AG04450 (cell line): ENCODE measurements at regions of chr16 and their contacts with region 1.

Region 1: GRCh38 chr16:29700253-29700987 is 21.4 kb downstream of the QPRT start:
- DNase-seq: peak; percentile 72
- H3K4me3 ChIP-seq: no peak overlapping the region
- H3K27ac ChIP-seq: no peak overlapping the region
- H3K27me3 ChIP-seq: peaks cover 7% of the 10 kb centered on the region
- CTCF ChIP-seq: peak; percentile 90

Region 2: DNA sequence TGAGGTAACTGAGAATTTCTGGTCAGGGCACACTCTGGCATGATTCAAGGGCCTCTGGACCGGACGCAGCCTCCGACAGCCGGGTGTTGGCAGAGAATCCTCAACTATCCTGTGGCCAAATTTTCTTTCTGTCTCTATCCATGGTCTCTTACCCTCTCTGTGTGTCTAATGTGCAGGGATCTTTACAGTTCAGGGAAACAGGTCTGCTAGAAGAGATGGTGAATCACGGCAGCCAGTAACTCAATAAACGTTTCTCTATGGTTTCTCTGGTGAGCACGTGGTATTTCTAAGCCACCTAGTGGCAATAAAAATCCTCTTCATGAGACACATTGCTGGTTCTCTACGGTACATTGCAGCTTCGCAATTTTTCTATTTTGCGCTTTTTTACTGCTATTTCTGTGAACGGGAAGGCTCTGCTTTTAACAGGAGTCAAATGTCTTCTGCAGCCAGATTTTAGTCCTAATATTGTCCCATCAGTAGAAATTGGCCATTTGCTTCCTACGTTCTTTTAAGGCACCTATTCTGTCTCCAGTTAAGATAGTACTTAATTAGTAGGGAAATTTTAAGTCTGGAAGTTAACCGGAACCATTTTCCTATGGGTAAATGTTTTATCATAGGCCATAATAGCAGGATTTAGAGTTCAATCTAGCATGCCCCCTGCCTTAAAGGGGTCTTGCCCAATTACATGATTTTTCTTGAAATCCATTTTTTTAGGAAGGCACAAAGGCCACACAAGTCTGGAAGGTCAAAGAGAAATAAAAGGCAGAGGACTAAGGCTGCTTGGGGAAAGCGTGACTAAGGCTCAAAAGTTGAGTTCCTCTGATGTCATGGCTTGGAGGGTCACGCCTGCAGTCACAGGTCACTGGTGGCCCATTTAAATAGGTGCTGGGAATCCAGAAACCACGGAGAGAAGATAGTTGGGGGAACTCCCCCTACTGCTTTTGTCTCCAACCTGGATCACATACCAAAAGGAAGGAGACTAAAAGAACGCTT is 10.1 kb after region 1 on chr16:
- CTCF ChIA-PET with region 1: interaction called, 12 read pairs
- POLR2A ChIA-PET with region 1: no interaction called
- DNase-seq: peak; percentile 48
- H3K4me3 ChIP-seq: no peak overlapping the region
- H3K27ac ChIP-seq: no peak overlapping the region
- H3K27me3 ChIP-seq: peaks cover 2% of the 10 kb centered on the region
- CTCF ChIP-seq: peak; percentile 71

Region 3: DNA sequence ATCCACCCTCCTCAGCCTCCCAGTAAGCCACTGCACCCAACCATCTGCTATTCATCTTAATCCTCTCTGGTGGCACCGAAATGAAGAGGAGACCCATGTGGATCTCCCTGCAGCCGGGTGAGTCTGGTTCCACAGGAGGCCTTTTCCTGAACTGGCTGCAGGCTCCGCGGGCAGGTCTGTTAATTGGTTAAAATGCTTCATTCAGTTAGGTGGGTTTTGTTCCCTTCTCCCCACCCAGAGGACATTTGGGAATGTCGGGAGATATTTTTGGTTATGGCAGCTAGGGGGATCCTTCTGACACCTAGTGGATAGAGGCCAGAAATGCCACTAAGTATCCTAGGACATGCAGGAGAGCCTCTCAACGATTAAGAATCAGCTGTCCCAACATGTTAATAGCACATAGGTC is 28.7 kb after region 1 on chr16:
- CTCF ChIA-PET with region 1: interaction called, 13 read pairs
- POLR2A ChIA-PET with region 1: no interaction called
- DNase-seq: peak; percentile 4
- H3K4me3 ChIP-seq: no peak overlapping the region
- H3K27ac ChIP-seq: no peak overlapping the region
- H3K27me3 ChIP-seq: peaks cover 10% of the 10 kb centered on the region
- CTCF ChIP-seq: peak; percentile 73

Region 4: DNA sequence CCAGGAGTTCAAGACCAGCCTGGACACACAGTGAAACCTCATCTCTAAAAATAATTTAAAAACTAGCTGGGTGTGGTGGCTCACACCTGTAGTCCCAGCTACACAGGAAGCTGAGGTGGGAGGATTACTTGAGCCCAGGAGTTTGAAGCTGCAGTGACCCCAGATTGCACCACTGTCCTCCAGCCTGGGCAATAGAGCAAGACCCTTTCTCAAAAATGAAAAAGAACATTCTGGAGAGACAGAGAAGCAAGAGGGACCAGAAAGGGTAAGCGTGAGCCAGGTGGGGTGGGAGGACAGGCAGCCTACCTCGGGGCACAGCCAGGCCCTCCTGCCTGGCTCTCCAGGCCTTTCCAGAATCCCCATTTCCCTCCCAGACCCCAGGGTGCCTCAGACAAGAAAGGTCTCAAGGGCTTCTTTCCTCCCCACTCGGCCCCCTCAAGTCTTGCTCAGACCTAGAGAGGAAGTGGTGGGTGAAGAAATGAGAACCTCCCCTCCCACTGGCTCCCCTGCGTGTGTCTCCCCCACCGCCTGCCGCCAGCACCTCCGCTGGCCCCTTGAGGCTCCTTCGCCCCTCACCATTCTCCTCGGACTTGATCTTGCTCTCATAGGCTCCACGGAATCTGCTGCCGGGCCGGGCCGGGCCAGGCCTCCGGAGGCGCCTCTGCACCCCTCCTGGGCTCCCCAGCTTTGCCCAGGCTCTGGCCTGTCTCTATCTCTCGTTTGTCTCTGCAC is 44.9 kb after region 1 on chr16:
- CTCF ChIA-PET with region 1: no interaction called
- POLR2A ChIA-PET with region 1: no interaction called
- DNase-seq: no peak
- H3K4me3 ChIP-seq: no peak overlapping the region
- H3K27ac ChIP-seq: no peak overlapping the region
- H3K27me3 ChIP-seq: peaks cover 15% of the 10 kb centered on the region
- CTCF ChIP-seq: no peak

Region 5: DNA sequence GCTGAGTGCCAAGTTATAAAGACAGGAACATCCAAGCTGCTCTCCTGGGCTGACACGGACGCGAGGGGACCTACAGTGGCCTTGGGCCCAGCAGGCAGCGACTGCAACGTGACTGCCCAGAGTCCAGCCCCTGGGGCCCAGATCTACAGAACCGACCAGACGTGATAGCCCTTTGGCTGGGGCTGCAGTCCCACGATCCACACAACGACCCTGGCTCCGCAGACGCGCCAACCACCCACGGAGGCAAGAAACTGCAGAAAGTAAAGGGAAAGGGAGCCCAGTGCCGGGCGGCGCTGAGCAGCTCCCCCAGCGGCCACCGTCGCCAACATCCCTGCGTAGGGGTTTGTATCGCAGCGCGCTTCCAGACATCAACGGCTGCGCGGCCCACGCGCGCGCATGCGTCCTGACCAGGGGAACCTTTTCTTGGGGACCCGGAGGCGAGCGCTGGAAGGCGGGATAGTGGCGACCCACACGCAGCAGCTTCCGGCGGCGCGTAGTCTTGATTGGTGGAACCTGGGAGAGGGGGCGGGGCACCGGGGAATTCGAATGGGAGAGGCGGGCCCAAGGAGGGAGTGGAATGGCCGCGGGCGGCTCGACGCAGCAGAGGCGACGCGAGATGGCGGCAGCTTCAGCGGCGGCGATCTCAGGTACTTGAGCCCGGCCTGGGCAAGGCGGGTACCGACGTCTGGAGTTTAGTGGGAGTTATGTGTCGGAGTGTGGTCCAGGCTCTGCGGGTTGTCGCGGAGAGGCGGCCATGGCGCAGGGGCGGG is 89.9 kb after region 1 on chr16 and contains the start of gene KIF22:
- CTCF ChIA-PET with region 1: interaction called, 11 read pairs
- POLR2A ChIA-PET with region 1: interaction called, 3 read pairs
- DNase-seq: peak; percentile 98
- H3K4me3 ChIP-seq: peak within 1 kb of the TSS; percentile 88
- H3K27ac ChIP-seq: peak within 1 kb of the TSS; percentile 57
- H3K27me3 ChIP-seq: no peaks in the 10 kb centered on the region
- CTCF ChIP-seq: peak; percentile 67
- polyA plus RNA-seq, gene KIF22: 14.1 and 19.9 TPM in 2 replicates

Region 6: DNA sequence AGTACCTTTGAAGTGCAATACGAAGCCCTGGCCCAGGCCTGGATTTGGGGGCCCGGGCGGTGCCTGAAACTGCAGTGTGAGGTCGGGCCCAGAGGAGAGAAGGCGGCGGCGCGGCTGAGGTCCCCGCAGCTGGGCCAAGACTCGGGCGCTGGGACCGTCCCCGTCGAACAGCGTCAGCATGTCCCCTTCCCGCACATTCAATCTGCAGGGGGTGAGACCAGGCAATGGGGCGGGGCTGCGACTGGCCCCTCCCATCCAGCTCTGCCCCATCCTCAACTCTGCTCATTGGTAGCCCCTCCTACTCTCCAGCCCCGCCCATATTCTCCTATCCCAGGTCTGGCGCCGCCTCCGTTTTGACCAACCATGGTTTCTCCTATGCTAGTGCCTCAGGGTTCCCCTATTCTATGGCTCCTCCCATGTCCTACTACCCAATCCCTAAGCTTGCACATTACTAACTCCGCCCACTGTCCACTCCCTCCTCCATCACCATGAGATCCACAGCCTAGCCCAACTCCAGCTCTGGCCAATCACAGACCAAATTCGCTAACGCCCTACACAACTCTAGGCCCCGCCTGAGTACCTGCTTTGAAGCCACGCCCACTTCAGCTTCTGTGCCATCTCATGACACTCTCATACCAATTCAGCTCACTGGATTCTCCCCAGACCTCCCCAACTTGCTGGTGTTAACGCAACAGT is 177.0 kb after region 1 on chr16:
- CTCF ChIA-PET with region 1: no interaction called
- POLR2A ChIA-PET with region 1: no interaction called
- DNase-seq: no peak
- H3K4me3 ChIP-seq: no peak overlapping the region
- H3K27ac ChIP-seq: no peak overlapping the region
- H3K27me3 ChIP-seq: peaks cover 27% of the 10 kb centered on the region
- CTCF ChIP-seq: no peak

Region 7: GRCh38 chr16:30032083-30032819 is 331.8 kb after region 1 on chr16:
- CTCF ChIA-PET with region 1: interaction called, 13 read pairs
- POLR2A ChIA-PET with region 1: no interaction called
- DNase-seq: no peak
- H3K4me3 ChIP-seq: no peak overlapping the region
- H3K27ac ChIP-seq: no peak overlapping the region
- H3K27me3 ChIP-seq: peaks cover 49% of the 10 kb centered on the region
- CTCF ChIP-seq: peak; percentile 84